ENCODE measurements at regions of chr7 and their contacts with region 1.

Region 1: DNA sequence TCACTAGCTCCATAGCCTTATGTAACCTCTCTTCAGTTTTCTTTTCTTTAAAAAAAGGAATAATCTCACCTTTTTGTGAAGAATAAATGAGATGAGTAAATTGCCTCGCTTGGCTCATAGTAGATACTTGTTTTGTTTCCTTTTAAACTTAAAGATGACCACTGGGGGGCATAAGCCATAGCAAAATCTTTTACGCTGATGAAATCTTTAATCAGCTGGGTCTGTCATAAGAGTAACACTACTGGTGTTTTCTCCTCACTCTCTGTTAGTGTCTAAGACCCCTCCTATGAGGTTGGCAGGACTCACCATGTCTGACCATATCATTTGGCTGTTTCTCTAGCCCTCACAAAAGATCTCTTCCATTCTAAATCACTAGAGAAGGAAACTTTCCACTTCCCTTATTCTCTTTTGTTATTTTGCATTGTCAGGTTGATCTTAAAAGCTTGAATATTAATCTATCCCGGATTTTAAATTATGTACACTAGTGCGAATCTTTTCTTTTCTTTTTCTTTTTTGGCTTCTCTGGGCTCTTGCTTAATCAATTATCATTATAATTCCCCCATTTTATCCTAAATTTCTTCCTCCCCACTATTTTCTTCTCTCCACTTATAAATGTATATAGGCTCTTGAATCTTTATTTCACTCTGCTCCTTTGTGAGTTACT is 12.5 kb downstream of the STAG3 start:
- DNase-seq: no peak
- H3K4me3 Mint-ChIP-seq: no peak overlapping the region
- H3K27ac Mint-ChIP-seq: no peak overlapping the region
- H3K4me1 Mint-ChIP-seq: peaks cover 21% of the 10 kb centered on the region
- H3K27me3 Mint-ChIP-seq: no peaks in the 10 kb centered on the region

Region 2: GRCh38 chr7:100022665-100023064 is 167.5 kb before region 1 on chr7:
- intact Hi-C with region 1: no loop called
- DNase-seq: no peak
- H3K4me3 Mint-ChIP-seq: no peak overlapping the region
- H3K27ac Mint-ChIP-seq: no peak overlapping the region
- H3K4me1 Mint-ChIP-seq: peaks cover 21% of the 10 kb centered on the region
- H3K27me3 Mint-ChIP-seq: no peaks in the 10 kb centered on the region

Region 3: DNA sequence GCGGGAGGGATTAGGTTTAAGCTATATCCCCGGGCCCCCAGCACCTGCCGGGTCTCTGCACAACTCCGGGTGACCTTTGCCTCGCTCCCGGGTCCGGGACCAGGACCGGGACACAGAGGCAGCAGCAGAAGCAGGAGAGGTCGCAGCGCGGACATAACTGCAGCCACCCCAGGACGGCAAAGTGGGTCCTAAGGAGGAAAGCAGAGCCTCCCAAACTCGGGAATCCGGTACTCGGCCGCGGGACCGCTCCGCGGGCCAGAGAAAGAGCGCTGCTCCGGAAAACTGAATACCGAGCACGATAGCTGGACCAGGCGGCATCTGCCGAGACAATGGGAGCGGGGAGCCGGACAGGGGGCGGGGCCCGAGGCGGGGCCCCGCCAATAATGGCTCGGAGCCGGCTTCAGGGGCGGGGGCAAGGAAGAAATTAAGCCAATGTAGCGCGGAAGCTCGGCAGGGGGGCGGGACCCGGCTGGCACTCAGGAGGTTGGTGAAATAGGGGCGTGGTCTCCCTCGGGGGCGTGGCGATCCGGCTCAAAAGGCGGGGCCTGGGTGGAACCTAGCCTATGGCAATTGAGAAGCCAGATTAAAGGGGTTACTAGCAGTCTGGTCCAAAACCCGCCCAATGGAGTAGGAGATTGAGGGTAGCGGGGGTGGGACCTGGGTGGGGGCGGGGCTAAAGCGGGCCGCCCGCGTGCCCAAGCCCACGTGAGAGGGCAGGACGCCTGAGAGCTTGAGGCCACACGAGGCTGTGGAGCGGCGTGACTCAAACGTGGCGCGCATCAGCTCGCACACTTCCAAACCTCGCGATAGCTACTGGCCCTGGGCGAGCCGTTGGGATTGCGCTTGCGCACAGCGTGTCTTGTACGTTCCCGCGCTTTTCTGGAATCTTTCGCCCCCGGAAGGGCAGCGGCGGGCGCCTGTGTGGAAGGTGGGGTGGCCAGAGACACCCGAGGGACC is 12.9 kb before region 1 on chr7 and contains the starts of genes GPC2 and STAG3:
- intact Hi-C with region 1: no loop called
- DNase-seq: peak; percentile 98
- H3K4me3 Mint-ChIP-seq: peak within 1 kb of the TSS; percentile 82
- H3K27ac Mint-ChIP-seq: peak within 1 kb of the TSS; percentile 77
- H3K4me1 Mint-ChIP-seq: peaks cover 35% of the 10 kb centered on the region
- H3K27me3 Mint-ChIP-seq: peaks cover 2% of the 10 kb centered on the region
- total RNA-seq, gene GPC2: 7.0 and 7.8 TPM in 2 replicates
- total RNA-seq, gene STAG3: 20.6 and 22.3 TPM in 2 replicates

Region 4: GRCh38 chr7:100215895-100216294 is 25.7 kb after region 1 on chr7:
- intact Hi-C with region 1: loop called (anchors 2 kb)
- DNase-seq: no peak
- H3K4me3 Mint-ChIP-seq: no peak overlapping the region
- H3K27ac Mint-ChIP-seq: no peak overlapping the region
- H3K4me1 Mint-ChIP-seq: peaks cover 53% of the 10 kb centered on the region
- H3K27me3 Mint-ChIP-seq: no peaks in the 10 kb centered on the region

Measured in activated T-helper 2 cell treated with anti-CD3 and anti-CD28 coated beads, Interferon-gamma antibody, Interleukin-2, Interleukin-4, amounts not matched to agents 10 μg/mL and 5 μg/mL and 100 μg/mL, durations not matched to agents 14 hours and 24 hours and 36 hours (primary cell).